Endothelial cell of umbilical vein (primary cell): ENCODE measurements at regions of chr3 and their contacts with region 1.

Region 1: GRCh38 chr3:78139166-78139565 is 1099.3 kb downstream of the ROBO2 start:
- DNase-seq: peak; percentile 71
- H3K4me3 ChIP-seq: no peak overlapping the region
- H3K27ac ChIP-seq: peak overlapping the region; percentile 67
- H3K4me1 ChIP-seq: peaks cover 53% of the 10 kb centered on the region
- H3K27me3 ChIP-seq: no peaks in the 10 kb centered on the region
- CTCF ChIP-seq: no peak
- POLR2A ChIP-seq: no peak

Region 2: GRCh38 chr3:77348231-77348855 is 790.8 kb before region 1 on chr3:
- CTCF ChIA-PET with region 1: interaction called, 17 read pairs
- POLR2A ChIA-PET with region 1: no interaction called
- dilution Hi-C with region 1: no loop called
- intact Hi-C with region 1: no loop called
- DNase-seq: peak; percentile 9
- H3K4me3 ChIP-seq: no peak overlapping the region
- H3K27ac ChIP-seq: no peak overlapping the region
- H3K4me1 ChIP-seq: no peaks in the 10 kb centered on the region
- H3K27me3 ChIP-seq: no peaks in the 10 kb centered on the region
- CTCF ChIP-seq: peak; percentile 25 to 27
- POLR2A ChIP-seq: no peak

Region 3: DNA sequence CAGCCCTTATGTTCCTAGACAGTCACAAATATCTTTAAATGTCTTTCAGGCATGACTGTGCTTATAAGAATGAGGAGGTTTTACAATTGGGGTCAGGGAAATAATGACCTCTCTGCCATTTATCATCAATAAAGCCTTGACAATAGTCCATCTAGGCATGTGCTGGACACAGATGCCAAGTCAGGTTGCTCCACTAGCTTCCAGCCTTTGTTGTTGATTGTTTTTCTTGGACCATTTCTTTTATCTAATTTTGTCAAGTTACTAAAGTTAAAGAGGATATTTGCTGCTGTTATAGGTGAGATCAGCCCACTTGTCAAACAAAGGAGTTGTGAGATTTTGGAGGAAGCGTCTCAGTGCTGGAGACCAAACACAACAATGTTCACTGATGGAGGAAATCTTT is 471.3 kb before region 1 on chr3:
- CTCF ChIA-PET with region 1: no interaction called
- POLR2A ChIA-PET with region 1: no interaction called
- dilution Hi-C with region 1: no loop called
- intact Hi-C with region 1: loop called (anchors 1 kb)
- DNase-seq: peak; percentile 35
- H3K4me3 ChIP-seq: no peak overlapping the region
- H3K27ac ChIP-seq: peak overlapping the region; percentile 39
- H3K4me1 ChIP-seq: peaks cover 14% of the 10 kb centered on the region
- H3K27me3 ChIP-seq: no peaks in the 10 kb centered on the region
- CTCF ChIP-seq: no peak
- POLR2A ChIP-seq: no peak

Region 4: DNA sequence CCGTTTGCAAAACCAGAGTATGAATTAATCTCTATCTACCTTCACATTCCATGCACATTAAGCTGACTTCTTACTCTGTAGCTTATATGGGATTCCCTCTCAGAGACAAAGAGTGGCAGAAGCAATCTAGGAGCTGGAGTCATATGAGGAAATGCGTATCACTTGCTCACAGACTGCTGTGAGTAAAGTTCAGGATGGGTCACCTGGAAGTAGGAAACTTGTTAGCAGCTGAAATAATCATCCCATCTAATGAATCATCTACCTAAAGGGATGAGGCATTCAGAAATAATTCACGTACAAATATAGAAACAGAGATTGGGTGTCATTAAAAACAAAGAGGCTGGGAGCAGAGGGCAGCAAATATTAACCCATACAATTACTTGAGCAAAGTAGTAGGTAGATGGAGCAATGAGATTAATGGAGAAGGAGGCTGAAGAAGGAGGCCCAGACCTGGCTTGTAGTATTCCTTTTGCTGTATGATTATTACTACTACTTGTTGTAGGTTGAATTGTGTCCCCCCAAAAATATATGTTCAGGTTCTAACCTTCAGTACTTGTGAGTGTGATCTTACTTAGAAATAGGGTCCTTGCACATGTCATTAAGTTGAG is 233.0 kb before region 1 on chr3:
- CTCF ChIA-PET with region 1: interaction called, 4 read pairs
- POLR2A ChIA-PET with region 1: no interaction called
- dilution Hi-C with region 1: no loop called
- intact Hi-C with region 1: loop called (anchors 1 kb)
- DNase-seq: peak; percentile 49
- H3K4me3 ChIP-seq: no peak overlapping the region
- H3K27ac ChIP-seq: peak overlapping the region; percentile 50
- H3K4me1 ChIP-seq: peaks cover 4% of the 10 kb centered on the region
- H3K27me3 ChIP-seq: no peaks in the 10 kb centered on the region
- CTCF ChIP-seq: no peak
- POLR2A ChIP-seq: no peak

Region 5: DNA sequence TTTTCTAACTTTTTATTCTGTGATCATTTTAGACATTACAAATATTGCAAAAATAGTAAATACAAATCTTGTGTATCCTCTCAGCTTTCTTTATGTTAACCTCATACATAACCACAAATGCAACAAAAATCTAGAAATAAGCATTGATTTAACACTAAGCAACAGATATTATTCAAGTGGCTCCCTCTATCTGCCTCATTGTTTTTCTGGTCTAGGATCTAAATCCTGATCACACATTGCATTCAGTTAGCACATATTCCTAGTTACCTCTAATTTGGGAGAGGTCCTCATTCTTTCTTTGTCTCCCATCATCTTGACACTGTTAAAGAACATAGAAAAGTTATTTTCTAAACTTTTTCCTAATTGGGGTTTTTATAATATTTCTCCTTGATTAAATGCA is 26.7 kb after region 1 on chr3:
- CTCF ChIA-PET with region 1: interaction called, 14 read pairs
- POLR2A ChIA-PET with region 1: no interaction called
- dilution Hi-C with region 1: no loop called
- intact Hi-C with region 1: no loop called
- DNase-seq: peak; percentile 26
- H3K4me3 ChIP-seq: no peak overlapping the region
- H3K27ac ChIP-seq: no peak overlapping the region
- H3K4me1 ChIP-seq: no peaks in the 10 kb centered on the region
- H3K27me3 ChIP-seq: no peaks in the 10 kb centered on the region
- CTCF ChIP-seq: no peak
- POLR2A ChIP-seq: no peak